ENCODE measurements at regions of chr19 and their contacts with region 1.

Region 1: GRCh38 chr19:45681391-45682015 is 10.2 kb downstream of the SNRPD2 start:
- DNase-seq: peak; percentile 91
- ATAC-seq: peak; percentile 79
- H3K4me3 Mint-ChIP-seq: peak overlapping the region; percentile 67
- H3K27ac Mint-ChIP-seq: peak overlapping the region; percentile 46
- H3K4me1 Mint-ChIP-seq: peaks cover 17% of the 10 kb centered on the region
- H3K27me3 Mint-ChIP-seq: peaks cover 3% of the 10 kb centered on the region
- CTCF ChIP-seq: peak; percentile 99

Region 2: DNA sequence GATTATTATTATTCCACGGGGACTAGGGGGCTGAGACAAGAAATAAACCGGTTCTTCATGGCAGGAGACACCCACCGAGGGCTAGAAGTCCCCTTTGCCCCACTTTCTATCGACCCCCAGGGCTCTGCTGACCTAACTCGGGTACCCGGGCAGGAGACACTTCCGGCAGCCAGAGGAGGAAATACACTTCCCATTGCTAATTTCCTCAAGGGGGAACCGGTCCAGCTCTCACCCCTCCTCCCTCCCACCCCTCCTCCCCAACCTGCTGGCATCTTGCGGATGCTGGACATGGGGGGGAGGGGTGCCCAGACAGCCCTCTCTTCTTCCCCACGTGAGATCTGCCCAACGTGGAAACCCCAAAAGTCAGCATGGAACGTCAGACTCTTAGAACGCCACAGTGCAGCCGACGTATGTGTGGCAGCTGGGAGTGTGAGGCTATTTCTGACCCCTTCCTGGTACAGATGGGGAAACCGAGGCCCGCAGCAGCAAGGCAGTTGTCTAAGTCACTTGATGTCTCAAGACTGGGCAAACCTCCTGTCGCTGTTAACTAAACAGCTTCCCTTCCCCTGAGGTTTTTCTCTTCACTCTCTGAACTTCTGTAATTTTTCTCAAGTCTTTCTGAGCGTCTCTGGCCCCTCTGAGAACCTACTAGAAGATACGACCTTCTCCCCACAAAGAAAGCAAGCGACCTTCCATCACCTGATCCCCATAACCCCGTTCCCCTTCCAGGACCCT is 83.1 kb before region 1 on chr19:
- CTCF ChIA-PET with region 1: no interaction called
- POLR2A ChIA-PET with region 1: no interaction called
- intact Hi-C with region 1: no loop called
- DNase-seq: peak; percentile 21
- ATAC-seq: peak; percentile 32
- H3K4me3 Mint-ChIP-seq: peak overlapping the region; percentile 57
- H3K27ac Mint-ChIP-seq: no peak overlapping the region
- H3K4me1 Mint-ChIP-seq: peaks cover 24% of the 10 kb centered on the region
- H3K27me3 Mint-ChIP-seq: peaks cover 69% of the 10 kb centered on the region
- CTCF ChIP-seq: no peak

Region 3: DNA sequence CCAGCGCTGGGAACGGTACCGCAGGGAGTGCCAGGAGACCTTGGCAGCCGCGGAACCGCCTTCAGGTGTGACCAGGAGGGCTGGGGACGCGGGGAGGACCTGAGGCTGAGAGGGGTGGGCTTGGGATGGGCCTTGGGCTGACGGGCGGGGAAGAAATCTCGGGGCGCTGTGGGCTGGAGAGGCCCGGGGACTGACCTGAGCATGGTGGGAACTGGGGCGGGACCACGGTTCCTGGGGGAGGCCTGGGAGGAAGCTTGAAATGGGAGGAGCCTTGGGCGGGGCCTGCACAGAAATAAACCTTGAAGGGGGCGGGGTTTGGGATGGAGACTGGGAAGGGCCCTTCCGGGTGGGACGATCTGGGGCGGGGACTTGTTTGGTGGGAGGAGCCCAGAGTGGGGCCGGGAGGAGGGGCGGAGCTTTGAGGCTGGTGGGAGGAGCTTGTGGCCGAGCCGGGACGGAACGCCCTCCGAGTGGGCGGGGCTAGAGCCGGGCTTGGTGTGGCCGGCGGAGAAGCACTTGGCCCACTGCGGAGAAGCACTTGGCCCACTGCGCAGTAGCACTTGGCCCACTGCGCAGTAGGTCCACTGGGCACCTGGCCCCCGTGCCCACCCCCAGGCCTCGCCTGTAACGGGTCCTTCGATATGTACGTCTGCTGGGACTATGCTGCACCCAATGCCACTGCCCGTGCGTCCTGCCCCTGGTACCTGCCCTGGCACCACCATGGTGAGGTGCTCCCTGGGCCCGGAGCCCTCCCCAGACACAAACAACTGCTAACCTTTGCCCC is 10.6 kb before region 1 on chr19:
- CTCF ChIA-PET with region 1: interaction called, 10 read pairs
- POLR2A ChIA-PET with region 1: interaction called, 4 read pairs
- intact Hi-C with region 1: no loop called
- DNase-seq: peak; percentile 85
- ATAC-seq: peak; percentile 61
- H3K4me3 Mint-ChIP-seq: peak overlapping the region; percentile 52
- H3K27ac Mint-ChIP-seq: no peak overlapping the region
- H3K4me1 Mint-ChIP-seq: peaks cover 32% of the 10 kb centered on the region
- H3K27me3 Mint-ChIP-seq: peaks cover 10% of the 10 kb centered on the region
- CTCF ChIP-seq: no peak